ENCODE measurements at regions of chr1 and their contacts with region 1.

Region 1: DNA sequence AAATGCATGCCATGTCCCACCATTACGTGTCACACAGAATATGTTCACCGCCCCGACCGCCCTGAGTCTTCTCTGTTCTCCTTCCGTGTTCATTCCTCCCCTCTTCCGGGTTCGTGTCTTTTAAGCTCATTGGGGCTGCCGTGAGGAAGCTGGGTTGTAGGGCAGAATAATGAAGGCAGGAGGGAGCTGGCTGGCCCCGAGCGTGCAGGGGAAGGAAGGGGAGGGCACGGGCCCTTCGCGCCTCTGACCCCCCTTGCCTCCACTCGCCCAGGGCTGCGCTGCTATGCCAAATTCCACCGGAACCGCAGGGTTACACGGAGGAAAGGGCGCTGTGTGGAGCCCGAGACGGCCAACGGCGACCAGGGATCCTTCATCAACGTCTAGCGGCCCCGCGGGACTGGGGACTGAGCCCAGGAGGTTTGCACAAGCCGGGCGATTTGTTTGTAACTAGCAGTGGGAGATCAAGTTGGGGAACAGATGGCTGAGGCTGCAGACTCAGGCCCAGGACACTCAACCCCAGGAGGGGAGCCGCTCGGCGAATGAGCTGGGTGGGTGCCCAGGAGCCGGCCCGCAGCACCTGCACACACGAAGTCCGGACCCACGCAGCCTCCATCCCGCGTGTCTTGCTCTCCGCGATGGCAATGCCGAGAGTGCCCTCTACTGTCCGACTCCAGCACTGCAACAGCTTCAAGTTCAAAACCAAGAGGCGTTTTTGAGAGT is 16.5 kb upstream of the AGTRAP start:
- DNase-seq: peak; percentile 72 to 91
- ATAC-seq: peak; percentile 87

Region 2: DNA sequence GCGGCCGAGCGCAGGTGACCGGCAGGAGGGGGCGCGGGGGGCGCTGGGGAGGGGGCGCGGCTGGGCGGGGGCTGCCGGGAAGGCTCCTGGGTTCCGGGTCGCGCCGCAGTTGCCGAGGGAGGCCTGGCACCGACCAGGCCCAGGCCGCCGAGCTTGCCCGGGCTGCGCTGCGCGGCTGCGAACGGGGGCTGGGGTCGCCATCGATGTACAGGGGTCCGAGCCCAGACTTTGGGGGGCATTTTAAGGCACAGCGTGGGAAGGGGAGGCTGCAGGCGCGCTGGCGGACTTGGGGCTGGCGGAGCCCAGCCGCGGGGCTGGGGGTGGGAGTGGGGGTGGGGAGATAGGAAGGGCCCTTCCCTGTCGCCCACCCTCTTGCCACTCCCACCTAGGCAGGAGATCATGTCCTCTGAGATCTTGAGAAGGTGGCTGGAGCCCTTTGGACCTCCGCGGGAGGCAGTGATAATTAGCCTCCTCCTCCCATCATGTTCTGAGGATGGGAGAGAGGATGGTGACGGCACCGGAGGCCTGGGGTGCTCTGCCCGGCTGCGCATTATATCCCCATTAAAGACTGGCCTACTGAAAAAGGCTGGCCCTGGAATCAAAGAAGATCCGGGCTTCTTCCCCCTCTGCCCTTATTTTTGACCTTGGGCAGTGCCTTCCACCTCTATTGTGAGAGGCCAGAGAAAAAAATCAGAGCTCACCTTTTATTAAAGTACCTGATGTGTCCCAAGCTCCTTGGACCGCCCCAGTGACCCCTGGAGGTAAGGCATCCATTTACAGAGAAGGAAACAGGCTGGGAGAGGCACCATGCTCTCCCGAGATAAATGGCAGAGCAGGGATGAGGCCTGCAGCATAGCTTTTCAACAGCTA is 64.3 kb before region 1 on chr1:
- intact Hi-C with region 1: loop called in 1 of 2 experiments (anchors 5 kb)
- DNase-seq: no peak
- ATAC-seq: peak; percentile 12

Measured in left colon (tissue), 2 donors.